ENCODE measurements at regions of chr22 and their contacts with region 1.

Region 1: GRCh38 chr22:49979587-49980264 is 19.2 kb downstream of the PIM3 start:
- DNase-seq: peak; percentile 52
- ATAC-seq: no peak
- H3K4me3 ChIP-seq: no peak overlapping the region
- H3K4me3 Mint-ChIP-seq: no peak overlapping the region
- H3K27ac ChIP-seq: no peak overlapping the region
- H3K27ac Mint-ChIP-seq: no peak overlapping the region
- H3K4me1 ChIP-seq: peaks cover 28 to 37% of the 10 kb centered on the region in 2 donors
- H3K4me1 Mint-ChIP-seq: peaks cover 29% of the 10 kb centered on the region
- H3K27me3 ChIP-seq: peaks cover 0 to 11% (median 5%) of the 10 kb centered on the region in 4 experiments
- H3K27me3 Mint-ChIP-seq: peaks cover 14% of the 10 kb centered on the region
- CTCF ChIP-seq: peak; percentile 51

Region 2: GRCh38 chr22:49867303-49868265 is 112.1 kb before region 1 on chr22:
- CTCF ChIA-PET with region 1: no interaction called
- POLR2A ChIA-PET with region 1: no interaction called
- intact Hi-C with region 1: no loop called
- DNase-seq: no peak
- ATAC-seq: no peak
- H3K4me3 ChIP-seq: no peak overlapping the region
- H3K4me3 Mint-ChIP-seq: no peak overlapping the region
- H3K27ac ChIP-seq: no peak overlapping the region
- H3K27ac Mint-ChIP-seq: no peak overlapping the region
- H3K4me1 ChIP-seq: no peaks in the 10 kb centered on the region
- H3K4me1 Mint-ChIP-seq: peaks cover 13% of the 10 kb centered on the region
- H3K27me3 ChIP-seq: no peaks in the 10 kb centered on the region
- H3K27me3 Mint-ChIP-seq: no peaks in the 10 kb centered on the region
- CTCF ChIP-seq: no peak

Region 3: GRCh38 chr22:49960159-49961004 is 19.3 kb before region 1 on chr22 and contains the start of gene PIM3:
- CTCF ChIA-PET with region 1: interaction called, 5 read pairs
- POLR2A ChIA-PET with region 1: interaction called, 11 read pairs
- intact Hi-C with region 1: loop called (anchors 2 kb)
- DNase-seq: peak; percentile 98
- ATAC-seq: peak; percentile 78
- H3K4me3 ChIP-seq: peak within 1 kb of the TSS; percentile 65 to 88 (median 77)
- H3K4me3 Mint-ChIP-seq: peak within 1 kb of the TSS; percentile 91
- H3K27ac ChIP-seq: peak within 1 kb of the TSS; percentile 85 to 94
- H3K27ac Mint-ChIP-seq: peak within 1 kb of the TSS; percentile 91
- H3K4me1 ChIP-seq: peaks cover 22 to 36% of the 10 kb centered on the region in 2 donors
- H3K4me1 Mint-ChIP-seq: peaks cover 38% of the 10 kb centered on the region
- H3K27me3 ChIP-seq: no peaks in the 10 kb centered on the region
- H3K27me3 Mint-ChIP-seq: no peaks in the 10 kb centered on the region
- CTCF ChIP-seq: no peak
- total RNA-seq, gene PIM3: 127 and 128 TPM in 2 replicates

Region 4: GRCh38 chr22:49992921-49993648 is 13.4 kb after region 1 on chr22:
- CTCF ChIA-PET with region 1: interaction called, 40 read pairs
- POLR2A ChIA-PET with region 1: interaction called, 3 read pairs
- intact Hi-C with region 1: no loop called
- DNase-seq: peak; percentile 82
- ATAC-seq: peak; percentile 96
- H3K4me3 ChIP-seq: no peak overlapping the region
- H3K4me3 Mint-ChIP-seq: peak overlapping the region; percentile 51
- H3K27ac ChIP-seq: no peak overlapping the region
- H3K27ac Mint-ChIP-seq: peak overlapping the region; percentile 82
- H3K4me1 ChIP-seq: peaks cover 11 to 24% of the 10 kb centered on the region in 2 donors
- H3K4me1 Mint-ChIP-seq: peaks cover 15% of the 10 kb centered on the region
- H3K27me3 ChIP-seq: no peaks in the 10 kb centered on the region
- H3K27me3 Mint-ChIP-seq: no peaks in the 10 kb centered on the region
- CTCF ChIP-seq: peak; percentile 87

Region 5: GRCh38 chr22:50016988-50017700 is 37.4 kb after region 1 on chr22:
- CTCF ChIA-PET with region 1: interaction called, 5 read pairs
- POLR2A ChIA-PET with region 1: no interaction called
- intact Hi-C with region 1: loop called (anchors 5 kb)
- DNase-seq: peak; percentile 23
- ATAC-seq: peak; percentile 62
- H3K4me3 ChIP-seq: no peak overlapping the region
- H3K4me3 Mint-ChIP-seq: peak overlapping the region; percentile 34
- H3K27ac ChIP-seq: no peak overlapping the region
- H3K27ac Mint-ChIP-seq: no peak overlapping the region
- H3K4me1 ChIP-seq: peaks cover 44 to 48% of the 10 kb centered on the region in 2 donors
- H3K4me1 Mint-ChIP-seq: peaks cover 43% of the 10 kb centered on the region
- H3K27me3 ChIP-seq: peaks cover 0 to 32% (median 9%) of the 10 kb centered on the region in 4 experiments
- H3K27me3 Mint-ChIP-seq: peaks cover 3% of the 10 kb centered on the region
- CTCF ChIP-seq: no peak

Region 6: DNA sequence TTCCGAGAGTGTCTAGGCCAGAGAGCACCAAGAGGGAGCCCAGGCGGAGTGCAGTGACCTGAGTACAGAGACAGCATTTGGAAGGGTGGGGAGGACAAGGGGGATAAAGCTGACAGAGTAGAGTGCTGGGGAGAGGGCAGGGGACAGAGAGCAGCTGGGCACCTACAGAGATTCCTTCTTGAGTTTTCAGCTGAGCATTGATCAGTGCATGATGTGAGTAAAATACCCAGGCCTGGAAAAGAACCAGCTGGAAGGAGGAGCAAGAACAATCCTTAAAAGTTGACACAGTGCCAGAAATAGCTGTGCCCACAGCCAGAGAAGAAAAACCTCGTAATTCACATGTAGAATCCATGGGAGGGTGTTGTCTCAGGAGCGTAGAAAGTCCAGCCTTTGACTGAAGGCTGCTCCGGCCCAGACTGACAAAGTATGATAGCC is 156.9 kb after region 1 on chr22:
- CTCF ChIA-PET with region 1: no interaction called
- POLR2A ChIA-PET with region 1: no interaction called
- intact Hi-C with region 1: no loop called
- DNase-seq: no peak
- ATAC-seq: no peak
- H3K4me3 ChIP-seq: no peak overlapping the region
- H3K4me3 Mint-ChIP-seq: no peak overlapping the region
- H3K27ac ChIP-seq: no peak overlapping the region
- H3K27ac Mint-ChIP-seq: no peak overlapping the region
- H3K4me1 ChIP-seq: no peaks in the 10 kb centered on the region
- H3K4me1 Mint-ChIP-seq: peaks cover 4% of the 10 kb centered on the region
- H3K27me3 ChIP-seq: peaks cover 0 to 5% (median 0%) of the 10 kb centered on the region in 4 experiments
- H3K27me3 Mint-ChIP-seq: peaks cover 28% of the 10 kb centered on the region
- CTCF ChIP-seq: no peak